ENCODE measurements at regions of chr7 and their contacts with region 1.

Region 1: GRCh38 chr7:29105752-29106668 is 40.3 kb downstream of the CPVL start:
- DNase-seq: peak in 2 of 10 donors; percentile 34
- H3K4me3 ChIP-seq: no peak overlapping the region
- H3K27ac ChIP-seq: no peak overlapping the region
- H3K27me3 ChIP-seq: peaks cover 0 to 9% (median 0%) of the 10 kb centered on the region in 45 donors
- CTCF ChIP-seq: peak; percentile 56 to 89 (median 80)

Region 2: DNA sequence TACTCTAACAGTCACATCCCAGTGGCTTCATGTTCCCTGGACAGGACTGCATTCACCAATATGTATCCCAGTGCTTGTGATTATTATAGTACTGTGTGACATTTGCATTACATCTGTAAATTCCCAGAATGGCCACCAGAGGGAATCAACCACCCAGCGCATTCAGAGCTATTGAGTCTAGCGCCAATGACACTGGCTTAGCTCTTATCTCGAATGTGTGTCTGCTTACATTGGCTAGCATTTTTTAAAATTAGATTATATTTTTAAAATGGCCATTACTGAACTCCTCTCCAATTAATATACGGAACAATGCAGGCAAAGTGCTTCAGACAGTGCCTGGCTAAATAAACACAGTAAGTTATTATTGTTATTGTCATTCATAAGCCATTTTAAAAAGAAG is 184.2 kb before region 1 on chr7:
- intact Hi-C with region 1: loop called (anchors 1 to 2 kb)
- DNase-seq: peak in 6 of 10 donors; percentile 40 to 74 (median 56)
- H3K4me3 ChIP-seq: peak overlapping the region in 32 of 59 donors; percentile 0 to 47 (median 26)
- H3K27ac ChIP-seq: peak overlapping the region in 1 of 59 donors; percentile 27
- H3K27me3 ChIP-seq: no peaks in the 10 kb centered on the region
- CTCF ChIP-seq: peak; percentile 83 to 99 (median 93)

Region 3: GRCh38 chr7:28955718-28956619 is 150.0 kb before region 1 on chr7:
- intact Hi-C with region 1: loop called in 1 of 2 experiments (anchors 10 kb)
- DNase-seq: peak in 8 of 10 donors; percentile 39 to 65 (median 46)
- H3K4me3 ChIP-seq: peak overlapping the region; percentile 33 to 74 (median 61)
- H3K27ac ChIP-seq: peak overlapping the region in 35 of 59 donors; percentile 1 to 85 (median 54)
- H3K27me3 ChIP-seq: peaks cover 0 to 42% (median 18%) of the 10 kb centered on the region in 45 donors
- CTCF ChIP-seq: peak in 44 of 56 donors; percentile 12 to 62 (median 43)